ENCODE measurements at regions of chr17 and their contacts with region 1.

Region 1: DNA sequence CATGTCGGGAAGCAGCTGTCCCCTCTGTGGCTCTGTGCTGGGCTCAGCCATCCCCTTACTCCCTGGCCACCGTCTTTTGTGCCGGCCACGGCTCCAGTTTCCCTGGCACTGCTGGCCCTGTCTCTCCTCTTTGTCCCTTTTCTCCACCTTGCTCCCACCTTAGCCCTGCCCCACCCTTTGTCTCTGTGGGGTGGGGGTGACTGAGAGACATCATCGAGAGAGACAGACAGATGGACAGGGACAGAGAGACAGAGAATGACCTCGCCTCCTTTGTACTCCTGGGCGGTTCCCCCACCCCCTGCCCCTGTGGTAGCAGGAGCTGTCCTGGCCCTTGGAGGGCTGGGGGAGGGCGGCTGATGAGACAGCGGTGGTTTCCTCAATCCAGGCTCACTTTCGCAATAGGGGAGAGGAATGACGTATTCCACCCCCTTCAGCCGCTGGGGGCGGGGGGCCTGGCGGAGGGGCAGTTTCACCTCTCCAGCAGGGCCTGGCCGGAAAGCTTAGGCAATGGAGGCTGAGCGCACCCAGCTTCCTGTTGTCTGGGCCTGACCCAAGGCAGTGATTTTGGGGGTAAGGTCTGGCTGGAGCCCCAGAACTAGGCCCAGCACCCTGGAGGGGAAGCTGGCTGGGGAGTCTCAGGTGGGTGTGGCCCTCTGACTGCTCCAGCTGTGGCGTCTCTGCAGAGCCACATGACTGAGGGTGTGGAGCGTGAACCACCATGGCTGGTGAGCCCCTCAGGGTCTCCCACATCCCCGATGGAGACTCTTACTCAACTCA is 7.3 kb downstream of the FMNL1 start:
- DNase-seq: peak; percentile 96
- H3K4me3 ChIP-seq: no peak overlapping the region
- H3K27ac ChIP-seq: peak overlapping the region; percentile 65
- H3K4me1 ChIP-seq: peaks cover 44% of the 10 kb centered on the region
- H3K27me3 ChIP-seq: no peaks in the 10 kb centered on the region

Region 2: GRCh38 chr17:45077643-45078042 is 151.3 kb before region 1 on chr17:
- in situ Hi-C with region 1: no loop called
- DNase-seq: no peak
- H3K4me3 ChIP-seq: no peak overlapping the region
- H3K27ac ChIP-seq: no peak overlapping the region
- H3K4me1 ChIP-seq: peaks cover 32% of the 10 kb centered on the region
- H3K27me3 ChIP-seq: no peaks in the 10 kb centered on the region

Region 3: GRCh38 chr17:45394913-45395568 is 166.1 kb after region 1 on chr17:
- in situ Hi-C with region 1: loop called (anchors 10 kb)
- DNase-seq: peak; percentile 89
- H3K4me3 ChIP-seq: peak overlapping the region; percentile 57
- H3K27ac ChIP-seq: no peak overlapping the region
- H3K4me1 ChIP-seq: no peaks in the 10 kb centered on the region
- H3K27me3 ChIP-seq: no peaks in the 10 kb centered on the region